IMR-90 (cell line): ENCODE measurements at regions of chr15 and their contacts with region 1.

Region 1: DNA sequence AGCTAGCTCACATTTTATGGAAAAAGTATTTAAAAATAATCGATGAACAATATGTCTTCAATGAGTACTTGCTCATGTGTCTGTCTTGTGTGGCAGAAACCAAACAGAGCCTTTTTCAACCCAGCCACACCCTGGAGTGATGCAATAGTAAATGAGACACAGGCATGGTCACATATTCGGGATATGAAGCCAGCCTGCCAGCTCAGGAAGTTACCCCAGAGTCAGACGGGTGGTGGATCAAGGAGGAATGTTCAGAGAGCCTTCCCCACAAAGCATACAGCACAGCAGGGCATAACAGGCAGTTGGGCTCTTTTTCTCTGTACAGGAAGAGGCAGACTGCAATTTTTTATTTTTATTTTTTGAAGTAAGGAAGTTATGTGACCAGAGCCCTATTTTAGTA is 27.3 kb downstream of the LARP6 start:
- DNase-seq: peak; percentile 74
- ATAC-seq: peak; percentile 80
- H3K4me3 ChIP-seq: no peak overlapping the region
- H3K27ac ChIP-seq: no peak overlapping the region
- H3K4me1 ChIP-seq: peaks cover 2% of the 10 kb centered on the region
- H3K27me3 ChIP-seq: no peaks in the 10 kb centered on the region
- CTCF ChIP-seq: no peak
- POLR2A ChIP-seq: no peak
- RAD21 ChIP-seq: no peak

Region 2: GRCh38 chr15:70856884-70857561 is 30.4 kb after region 1 on chr15:
- CTCF ChIA-PET with region 1: interaction called, 6 read pairs
- POLR2A ChIA-PET with region 1: interaction called, 4 read pairs
- dilution Hi-C with region 1: no loop called
- in situ Hi-C with region 1: no loop called
- intact Hi-C with region 1: loop called (anchors 2 kb)
- DNase-seq: peak; percentile 100
- ATAC-seq: peak; percentile 62
- H3K4me3 ChIP-seq: no peak overlapping the region
- H3K27ac ChIP-seq: peak overlapping the region; percentile 87
- H3K4me1 ChIP-seq: peaks cover 17% of the 10 kb centered on the region
- H3K27me3 ChIP-seq: no peaks in the 10 kb centered on the region
- CTCF ChIP-seq: no peak
- POLR2A ChIP-seq: peak; percentile 85
- RAD21 ChIP-seq: peak; percentile 15; the same call in 1 of the 2 replicates